ENCODE measurements at regions of chr21 and their contacts with region 1.

Region 1: DNA sequence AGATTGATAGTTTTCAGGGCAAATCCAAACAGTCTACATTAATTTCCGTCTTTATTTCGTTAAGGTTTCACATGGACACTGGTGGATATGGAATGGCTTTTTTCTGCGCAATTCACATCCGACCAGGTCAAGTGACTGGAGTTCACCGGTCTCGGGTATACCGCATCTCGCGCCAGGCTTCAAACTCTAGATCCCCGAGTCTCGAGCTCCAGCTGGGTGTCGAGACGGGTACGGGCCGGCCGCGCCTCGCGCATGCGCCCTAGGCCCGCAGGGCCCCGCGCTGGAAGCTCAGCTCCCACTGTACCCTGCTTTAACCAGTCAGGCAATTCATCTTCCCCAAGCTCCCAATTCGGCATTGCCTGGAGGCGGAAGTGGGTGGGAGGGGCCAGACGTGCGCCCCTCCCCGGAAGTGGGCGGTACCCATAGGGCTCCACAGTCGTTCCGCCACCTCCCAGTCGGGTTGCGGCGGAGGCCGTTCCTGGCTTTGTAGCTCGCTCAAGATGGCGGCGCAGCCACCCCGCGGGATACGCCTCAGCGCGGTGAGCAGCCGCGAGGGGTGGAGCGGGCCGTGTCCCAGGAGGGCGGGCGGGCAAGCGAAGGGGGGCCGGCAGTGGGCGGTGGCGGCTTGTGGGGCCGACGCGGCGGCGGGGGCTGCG is at the start of gene MORC3:
- DNase-seq: peak; percentile 95 to 99 (median 97)
- ATAC-seq: peak; percentile 89 to 92 (median 90)
- H3K4me3 ChIP-seq: peak within 1 kb of the TSS; percentile 77 to 87
- H3K4me3 Mint-ChIP-seq: peak within 1 kb of the TSS; percentile 94 to 97 (median 95)
- H3K27ac ChIP-seq: peak within 1 kb of the TSS; percentile 61
- H3K27ac Mint-ChIP-seq: peak within 1 kb of the TSS; percentile 95 to 98
- H3K4me1 ChIP-seq: peaks cover 15 to 19% of the 10 kb centered on the region in 2 experiments
- H3K4me1 Mint-ChIP-seq: peaks cover 33 to 48% (median 36%) of the 10 kb centered on the region in 3 donors
- H3K27me3 ChIP-seq: no peaks in the 10 kb centered on the region
- H3K27me3 Mint-ChIP-seq: no peaks in the 10 kb centered on the region
- total RNA-seq, gene MORC3: 53.1 to 74.8 (median 71.6) TPM

Region 2: DNA sequence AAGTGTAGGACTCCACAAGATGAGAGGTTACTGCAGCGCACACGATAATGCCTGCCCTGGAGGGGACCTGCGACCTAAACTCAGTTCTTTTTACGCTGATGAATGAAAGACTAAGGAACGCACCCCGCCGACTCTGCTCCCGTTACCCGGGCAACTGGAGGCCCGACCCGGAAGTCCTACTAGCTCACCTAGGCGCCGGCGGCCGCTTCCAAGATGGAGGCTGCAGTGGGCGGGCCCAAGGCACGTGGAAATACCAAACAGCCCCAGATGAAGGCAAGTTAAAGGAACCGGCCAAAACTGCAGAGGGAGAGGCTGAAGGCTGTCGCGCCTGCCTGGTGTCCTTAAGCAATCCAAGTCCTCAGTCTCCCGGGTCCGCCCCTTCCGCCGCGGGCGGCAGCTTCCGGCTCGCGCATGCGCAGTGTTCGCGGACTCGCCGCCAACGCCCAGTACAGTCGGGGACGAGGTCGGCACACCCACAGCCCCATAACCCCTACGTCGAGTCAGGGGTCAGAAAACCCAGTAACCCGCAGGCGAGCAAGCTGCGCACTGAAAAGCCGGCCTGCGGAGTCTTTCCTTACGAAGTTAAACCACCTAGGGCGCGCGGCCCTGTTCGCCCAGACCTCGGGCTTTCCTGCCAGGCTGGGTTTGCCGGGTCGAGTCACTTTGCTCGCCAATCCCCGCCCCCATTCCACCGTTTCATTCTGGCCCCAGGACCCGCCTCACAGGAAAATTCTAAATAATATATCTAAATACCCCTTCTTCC is 259.6 kb before region 1 on chr21 and contains the start of gene SETD4:
- CTCF ChIA-PET with region 1: no interaction called
- POLR2A ChIA-PET with region 1: interaction called in 1 of 2 experiments, 12 read pairs
- DNase-seq: peak; percentile 79 to 94 (median 88)
- ATAC-seq: peak; percentile 91 to 92 (median 92)
- H3K4me3 ChIP-seq: peak within 1 kb of the TSS; percentile 76 to 77
- H3K4me3 Mint-ChIP-seq: peak within 1 kb of the TSS; percentile 79 to 96 (median 93)
- H3K27ac ChIP-seq: peak within 1 kb of the TSS; percentile 85
- H3K27ac Mint-ChIP-seq: peak within 1 kb of the TSS; percentile 98
- H3K4me1 ChIP-seq: peaks cover 3 to 17% of the 10 kb centered on the region in 2 experiments
- H3K4me1 Mint-ChIP-seq: peaks cover 10 to 30% (median 20%) of the 10 kb centered on the region in 3 donors
- H3K27me3 ChIP-seq: no peaks in the 10 kb centered on the region
- H3K27me3 Mint-ChIP-seq: no peaks in the 10 kb centered on the region
- total RNA-seq, gene SETD4: 16.5 to 36.4 (median 30.3) TPM

Region 3: GRCh38 chr21:36174780-36175179 is 145.1 kb before region 1 on chr21:
- CTCF ChIA-PET with region 1: interaction called in 1 of 2 experiments, 11 read pairs
- POLR2A ChIA-PET with region 1: interaction called, 4 to 14 read pairs
- DNase-seq: no peak
- ATAC-seq: no peak
- H3K4me3 ChIP-seq: no peak overlapping the region
- H3K4me3 Mint-ChIP-seq: no peak overlapping the region
- H3K27ac ChIP-seq: no peak overlapping the region
- H3K27ac Mint-ChIP-seq: peak overlapping the region; percentile 52 to 73
- H3K4me1 ChIP-seq: peaks cover 4 to 26% of the 10 kb centered on the region in 2 experiments
- H3K4me1 Mint-ChIP-seq: peaks cover 14 to 38% (median 15%) of the 10 kb centered on the region in 3 donors
- H3K27me3 ChIP-seq: no peaks in the 10 kb centered on the region
- H3K27me3 Mint-ChIP-seq: no peaks in the 10 kb centered on the region

Region 4: DNA sequence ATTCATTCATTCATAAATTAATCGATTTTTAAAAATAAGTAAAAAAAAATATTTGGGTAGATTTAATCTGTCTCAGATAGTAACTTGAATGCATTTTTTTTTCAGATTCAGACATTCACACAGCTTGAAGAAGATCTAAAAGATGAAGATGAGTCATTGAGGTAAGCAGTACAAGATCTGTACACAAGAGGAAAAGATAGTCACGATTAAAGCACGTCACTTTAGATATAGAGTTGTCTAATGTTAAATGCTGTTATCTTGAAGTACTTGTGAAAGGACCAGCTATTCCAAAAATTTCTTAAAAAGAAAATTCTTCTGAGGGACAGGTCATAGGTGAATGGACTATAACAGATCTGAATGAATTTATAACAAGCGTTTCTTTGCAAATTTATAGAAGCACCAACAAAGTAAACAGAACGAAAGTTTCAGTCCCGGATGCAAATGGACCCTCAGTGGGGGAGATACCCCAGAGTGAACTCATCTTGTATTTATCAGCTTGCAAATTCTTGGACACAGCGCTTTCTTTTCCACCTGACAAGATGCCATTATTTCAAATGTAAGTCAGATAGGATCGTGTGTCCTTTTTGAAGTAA is 31.1 kb before region 1 on chr21:
- CTCF ChIA-PET with region 1: interaction called, 10 to 39 read pairs
- POLR2A ChIA-PET with region 1: interaction called, 5 to 33 read pairs
- DNase-seq: peak in 1 of 35 experiments; percentile 70
- ATAC-seq: peak; percentile 82 to 89 (median 87)
- H3K4me3 ChIP-seq: peak overlapping the region in 1 of 2 donors; percentile 29
- H3K4me3 Mint-ChIP-seq: peak overlapping the region; percentile 73 to 77 (median 76)
- H3K27ac ChIP-seq: peak overlapping the region; percentile 84
- H3K27ac Mint-ChIP-seq: peak overlapping the region; percentile 95 to 96
- H3K4me1 ChIP-seq: peaks cover 4 to 22% of the 10 kb centered on the region in 2 experiments
- H3K4me1 Mint-ChIP-seq: peaks cover 13 to 29% (median 25%) of the 10 kb centered on the region in 3 donors
- H3K27me3 ChIP-seq: no peaks in the 10 kb centered on the region
- H3K27me3 Mint-ChIP-seq: no peaks in the 10 kb centered on the region

Region 5: GRCh38 chr21:36330904-36331303 is 11.0 kb after region 1 on chr21:
- CTCF ChIA-PET with region 1: interaction called, 6 to 20 read pairs
- POLR2A ChIA-PET with region 1: interaction called in 1 of 2 experiments, 6 read pairs
- DNase-seq: peak in 32 of 35 experiments; percentile 11 to 75 (median 41)
- ATAC-seq: peak; percentile 78 to 85 (median 82)
- H3K4me3 ChIP-seq: no peak overlapping the region
- H3K4me3 Mint-ChIP-seq: peak overlapping the region in 2 of 3 donors; percentile 21 to 32
- H3K27ac ChIP-seq: no peak overlapping the region
- H3K27ac Mint-ChIP-seq: peak overlapping the region; percentile 74 to 76
- H3K4me1 ChIP-seq: peaks cover 8 to 53% of the 10 kb centered on the region in 2 experiments
- H3K4me1 Mint-ChIP-seq: peaks cover 49 to 65% (median 58%) of the 10 kb centered on the region in 3 donors
- H3K27me3 ChIP-seq: no peaks in the 10 kb centered on the region
- H3K27me3 Mint-ChIP-seq: no peaks in the 10 kb centered on the region

Region 6: DNA sequence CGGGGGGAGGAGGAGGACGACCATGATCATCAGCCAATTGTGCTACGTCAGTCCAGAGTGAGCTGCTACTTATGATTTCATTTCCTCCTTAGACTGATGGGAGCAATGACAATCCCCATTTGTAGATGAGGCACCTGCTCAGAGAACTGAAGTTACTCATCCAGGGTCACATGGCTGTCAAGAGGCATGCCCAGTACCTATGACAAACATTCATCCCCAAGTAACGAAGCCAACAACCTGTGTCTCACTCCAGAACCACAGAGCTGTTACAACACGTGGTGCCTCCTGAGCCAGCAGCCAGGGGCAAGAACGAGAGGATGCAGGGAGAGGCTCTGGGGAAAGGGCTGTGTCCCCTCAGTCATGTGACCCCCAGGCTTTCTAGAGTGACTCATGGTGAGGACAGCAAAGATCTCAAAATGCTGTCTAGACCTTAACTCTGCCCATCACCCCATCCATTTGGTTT is 472.6 kb after region 1 on chr21:
- CTCF ChIA-PET with region 1: no interaction called
- POLR2A ChIA-PET with region 1: no interaction called
- DNase-seq: no peak
- ATAC-seq: no peak
- H3K4me3 ChIP-seq: no peak overlapping the region
- H3K4me3 Mint-ChIP-seq: no peak overlapping the region
- H3K27ac ChIP-seq: no peak overlapping the region
- H3K27ac Mint-ChIP-seq: no peak overlapping the region
- H3K4me1 ChIP-seq: no peaks in the 10 kb centered on the region
- H3K4me1 Mint-ChIP-seq: no peaks in the 10 kb centered on the region
- H3K27me3 ChIP-seq: no peaks in the 10 kb centered on the region
- H3K27me3 Mint-ChIP-seq: no peaks in the 10 kb centered on the region